GM12878 (cell line): ENCODE measurements at regions of chr20 and their contacts with region 1.

Region 1: GRCh38 chr20:47475419-47476044 is 26.2 kb upstream of the NCOA3 start:
- DNase-seq: no peak
- ATAC-seq: no peak
- H3K4me3 ChIP-seq: no peak overlapping the region
- H3K27ac ChIP-seq: no peak overlapping the region
- H3K4me1 ChIP-seq: peaks cover 30% of the 10 kb centered on the region
- H3K27me3 ChIP-seq: no peaks in the 10 kb centered on the region
- CTCF ChIP-seq: no peak
- EP300 ChIP-seq: no peak
- POLR2A ChIP-seq: no peak
- RAD21 ChIP-seq: no peak

Region 2: GRCh38 chr20:47055699-47056369 is 419.7 kb before region 1 on chr20:
- CTCF ChIA-PET with region 1: no interaction called
- POLR2A ChIA-PET with region 1: no interaction called
- RAD21 ChIA-PET with region 1: no interaction called
- SMC1A ChIA-PET with region 1: no interaction called
- in situ Hi-C with region 1: no loop called
- intact Hi-C with region 1: no loop called
- DNase-seq: no peak
- ATAC-seq: no peak
- H3K4me3 ChIP-seq: no peak overlapping the region
- H3K27ac ChIP-seq: no peak overlapping the region
- H3K4me1 ChIP-seq: no peaks in the 10 kb centered on the region
- H3K27me3 ChIP-seq: no peaks in the 10 kb centered on the region; a peak in 2 of 4 replicates
- CTCF ChIP-seq: no peak
- EP300 ChIP-seq: no peak
- POLR2A ChIP-seq: no peak
- RAD21 ChIP-seq: no peak

Region 3: DNA sequence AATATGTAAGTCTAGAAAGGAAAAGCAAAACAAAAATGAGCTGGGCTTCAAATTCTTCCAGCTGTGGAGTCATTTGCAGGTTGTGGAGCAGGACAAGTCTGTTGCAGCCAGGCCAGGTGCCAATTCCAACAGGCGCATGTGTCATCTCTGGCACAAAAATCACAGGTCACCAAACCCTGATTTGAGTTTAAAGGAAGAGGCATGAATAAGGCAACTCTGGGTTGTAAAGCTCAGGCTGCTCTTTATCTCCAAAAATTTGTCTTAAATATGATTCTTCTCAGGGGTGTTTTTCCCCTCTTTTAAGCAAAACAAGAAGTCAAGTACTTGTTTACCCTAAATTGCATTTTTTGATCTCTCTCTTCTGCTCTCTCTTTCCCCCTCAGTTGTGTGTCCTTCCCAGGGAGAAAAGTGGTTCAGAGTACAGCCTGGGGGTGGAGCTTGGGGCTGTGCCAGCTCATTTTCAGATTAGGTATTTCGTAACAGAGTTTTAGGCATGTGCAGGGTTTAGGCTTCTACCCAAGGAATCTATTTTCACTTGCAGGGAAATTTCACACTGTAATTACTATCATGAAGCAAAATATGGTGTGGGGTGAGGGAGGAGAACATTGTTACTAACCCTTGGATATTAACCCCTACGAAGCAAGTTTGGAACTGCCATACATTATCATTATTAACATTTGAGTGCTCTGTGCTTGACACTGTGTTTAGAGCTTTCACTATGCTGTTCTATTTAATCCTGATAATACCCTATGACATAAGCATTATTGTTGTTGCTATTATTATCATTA is 17.8 kb after region 1 on chr20:
- CTCF ChIA-PET with region 1: interaction called, 23 read pairs
- POLR2A ChIA-PET with region 1: interaction called, 78 read pairs
- RAD21 ChIA-PET with region 1: interaction called, 53 read pairs
- SMC1A ChIA-PET with region 1: interaction called, 134 read pairs
- in situ Hi-C with region 1: no loop called
- intact Hi-C with region 1: no loop called
- DNase-seq: no peak
- ATAC-seq: peak; percentile 48
- H3K4me3 ChIP-seq: peak overlapping the region; percentile 19
- H3K27ac ChIP-seq: peak overlapping the region; percentile 82
- H3K4me1 ChIP-seq: peaks cover 81% of the 10 kb centered on the region
- H3K27me3 ChIP-seq: no peaks in the 10 kb centered on the region
- CTCF ChIP-seq: no peak
- EP300 ChIP-seq: no peak
- POLR2A ChIP-seq: no peak
- RAD21 ChIP-seq: no peak